Activated B cell treated with CpG ODN at 0.5 μM for 24 hours (primary cell): ENCODE measurements at regions of chr2 and their contacts with region 1.

Region 1: DNA sequence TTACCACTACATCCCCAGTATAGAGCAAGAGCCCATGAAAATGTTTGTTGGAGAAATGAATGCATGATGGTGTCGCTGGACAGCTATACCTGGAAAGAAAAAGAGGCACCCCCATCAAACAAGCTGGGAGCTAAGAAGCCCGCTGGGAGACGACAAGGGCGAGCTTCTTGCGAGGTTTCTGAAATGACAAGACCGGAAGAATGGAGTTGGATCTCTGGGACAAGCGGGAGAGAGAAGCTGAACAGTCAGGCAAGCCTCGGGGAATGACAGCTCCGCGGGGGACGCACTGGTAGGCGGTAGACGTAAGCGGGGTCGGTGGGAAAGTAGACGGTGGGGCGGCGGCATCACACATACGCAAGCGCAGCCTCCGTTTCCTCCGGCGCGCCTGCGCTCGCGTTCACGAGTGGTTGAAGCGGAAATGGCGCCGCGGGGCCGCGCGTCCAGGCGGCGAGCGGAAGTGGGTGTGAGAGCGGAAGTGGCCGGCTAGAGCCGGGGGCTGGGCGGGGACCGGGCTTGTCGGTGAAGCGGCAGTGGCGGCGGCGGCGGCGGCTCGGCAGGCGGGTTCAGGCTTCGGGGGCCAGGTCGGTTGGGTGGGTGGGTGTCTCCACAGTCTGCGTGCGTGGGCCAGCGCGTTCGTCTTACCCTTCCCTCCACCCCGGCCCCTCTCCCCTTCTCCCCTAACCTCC is at the start of gene ARPC2:
- DNase-seq: peak; percentile 95
- ATAC-seq: peak; percentile 63
- H3K4me3 Mint-ChIP-seq: peak within 1 kb of the TSS; percentile 98
- H3K27ac Mint-ChIP-seq: peak within 1 kb of the TSS; percentile 99
- H3K4me1 Mint-ChIP-seq: peaks cover 45% of the 10 kb centered on the region
- H3K27me3 Mint-ChIP-seq: no peaks in the 10 kb centered on the region
- CTCF ChIP-seq: no peak
- total RNA-seq, gene ARPC2: 711 and 737 TPM in 2 replicates

Region 2: DNA sequence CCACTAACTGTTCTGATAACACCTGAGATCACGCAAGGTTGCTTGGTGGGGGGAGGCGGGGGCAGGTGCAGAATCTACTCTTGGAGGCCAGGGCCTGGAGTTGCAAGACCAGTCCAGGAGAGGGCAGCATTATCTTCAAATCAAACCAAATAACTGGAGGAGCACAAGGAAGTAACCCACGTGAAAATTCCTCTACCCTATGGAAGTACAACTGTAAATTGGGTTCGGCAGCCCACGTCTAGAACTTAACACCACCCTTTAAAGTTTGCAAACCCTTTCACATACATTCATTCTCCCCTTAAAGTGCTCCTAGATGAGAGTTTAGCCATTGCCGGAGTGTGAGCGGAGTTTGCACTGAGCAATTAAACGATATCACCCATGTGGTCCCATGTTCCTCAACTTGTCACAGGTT is 30.5 kb before region 1 on chr2:
- CTCF ChIA-PET with region 1: interaction called, 5 read pairs
- POLR2A ChIA-PET with region 1: interaction called, 4 read pairs
- intact Hi-C with region 1: loop called (anchors 1 kb)
- DNase-seq: peak; percentile 43
- ATAC-seq: peak; percentile 99
- H3K4me3 Mint-ChIP-seq: no peak overlapping the region
- H3K27ac Mint-ChIP-seq: no peak overlapping the region
- H3K4me1 Mint-ChIP-seq: peaks cover 7% of the 10 kb centered on the region
- H3K27me3 Mint-ChIP-seq: peaks cover 1% of the 10 kb centered on the region
- CTCF ChIP-seq: peak; percentile 3

Region 3: GRCh38 chr2:218229239-218229638 is 12.4 kb after region 1 on chr2:
- CTCF ChIA-PET with region 1: interaction called, 23 read pairs
- POLR2A ChIA-PET with region 1: interaction called, 211 read pairs
- intact Hi-C with region 1: loop called (anchors 1 kb)
- DNase-seq: no peak
- ATAC-seq: peak; percentile 91
- H3K4me3 Mint-ChIP-seq: peak overlapping the region; percentile 56
- H3K27ac Mint-ChIP-seq: peak overlapping the region; percentile 87
- H3K4me1 Mint-ChIP-seq: peaks cover 67% of the 10 kb centered on the region
- H3K27me3 Mint-ChIP-seq: no peaks in the 10 kb centered on the region
- CTCF ChIP-seq: no peak

Region 4: DNA sequence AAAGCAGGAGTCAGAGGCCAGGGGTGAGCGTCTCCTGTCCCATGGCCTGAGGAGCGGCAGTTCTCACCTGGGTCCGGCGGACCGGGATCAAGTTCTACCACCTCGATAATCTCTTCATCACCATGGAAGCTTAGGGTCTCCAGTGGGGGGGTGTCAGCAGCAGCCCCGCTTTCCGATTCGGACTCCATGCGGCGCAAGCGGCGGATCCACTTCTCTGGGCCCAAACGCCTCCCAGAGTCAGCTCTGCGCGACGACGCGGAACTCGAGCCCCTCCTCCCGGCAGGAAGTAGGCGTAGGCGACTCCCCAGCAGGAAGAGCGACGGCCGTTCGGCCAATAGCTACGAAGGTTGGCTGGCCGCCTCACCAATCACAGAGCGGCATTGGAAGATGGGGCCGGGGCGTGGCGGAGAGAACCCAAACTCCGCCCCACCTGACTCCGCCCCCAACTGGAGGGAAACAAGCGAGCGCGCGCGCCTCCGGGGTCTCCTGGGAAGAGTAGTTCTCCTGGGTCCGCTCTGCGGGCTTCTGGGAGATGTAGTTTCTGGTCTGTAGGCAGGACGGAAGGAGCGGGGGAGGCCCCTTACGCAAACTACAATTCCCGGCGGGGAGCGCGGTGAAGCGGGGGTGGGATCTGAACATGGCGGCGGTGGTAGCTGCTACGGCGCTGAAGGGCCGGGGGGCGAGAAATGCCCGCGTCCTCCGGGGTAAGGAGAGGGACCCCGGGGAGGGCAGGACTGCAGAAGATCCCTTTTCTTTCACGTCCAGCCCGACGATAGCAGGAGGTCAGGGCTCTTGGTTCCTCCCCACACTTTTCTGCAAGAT is 53.3 kb after region 1 on chr2 and contains the starts of genes AAMP and PNKD:
- CTCF ChIA-PET with region 1: interaction called, 3 read pairs
- POLR2A ChIA-PET with region 1: interaction called, 52 read pairs
- intact Hi-C with region 1: loop called (anchors 1 kb)
- DNase-seq: peak; percentile 100
- ATAC-seq: peak; percentile 83
- H3K4me3 Mint-ChIP-seq: peak within 1 kb of the TSS; percentile 93
- H3K27ac Mint-ChIP-seq: peak within 1 kb of the TSS; percentile 88
- H3K4me1 Mint-ChIP-seq: peaks cover 67% of the 10 kb centered on the region
- H3K27me3 Mint-ChIP-seq: no peaks in the 10 kb centered on the region
- CTCF ChIP-seq: no peak
- total RNA-seq, gene AAMP: 63.4 and 63.6 TPM in 2 replicates
- total RNA-seq, gene PNKD: 21.0 and 23.7 TPM in 2 replicates

Region 5: GRCh38 chr2:218292048-218293014 is 75.5 kb after region 1 on chr2 and contains the start of gene TMBIM1:
- CTCF ChIA-PET with region 1: no interaction called
- POLR2A ChIA-PET with region 1: interaction called, 19 read pairs
- intact Hi-C with region 1: loop called (anchors 1 kb)
- DNase-seq: peak; percentile 89
- ATAC-seq: peak; percentile 80
- H3K4me3 Mint-ChIP-seq: peak within 1 kb of the TSS; percentile 83
- H3K27ac Mint-ChIP-seq: peak within 1 kb of the TSS; percentile 92
- H3K4me1 Mint-ChIP-seq: peaks cover 73% of the 10 kb centered on the region
- H3K27me3 Mint-ChIP-seq: no peaks in the 10 kb centered on the region
- CTCF ChIP-seq: peak; percentile 40
- total RNA-seq, gene TMBIM1: 40.7 and 45.0 TPM in 2 replicates

Region 6: GRCh38 chr2:218312267-218312756 is 95.5 kb after region 1 on chr2:
- CTCF ChIA-PET with region 1: no interaction called
- POLR2A ChIA-PET with region 1: no interaction called
- intact Hi-C with region 1: no loop called
- DNase-seq: no peak
- ATAC-seq: no peak
- H3K4me3 Mint-ChIP-seq: no peak overlapping the region
- H3K27ac Mint-ChIP-seq: no peak overlapping the region
- H3K4me1 Mint-ChIP-seq: peaks cover 5% of the 10 kb centered on the region
- H3K27me3 Mint-ChIP-seq: no peaks in the 10 kb centered on the region
- CTCF ChIP-seq: no peak

Region 7: GRCh38 chr2:218671654-218672566 is 455.1 kb after region 1 on chr2 and contains the starts of genes RNF25 and STK36:
- CTCF ChIA-PET with region 1: no interaction called
- POLR2A ChIA-PET with region 1: no interaction called
- intact Hi-C with region 1: loop called (anchors 5 kb)
- DNase-seq: peak; percentile 66
- ATAC-seq: peak; percentile 95
- H3K4me3 Mint-ChIP-seq: peak within 1 kb of the TSS; percentile 99
- H3K27ac Mint-ChIP-seq: peak within 1 kb of the TSS; percentile 97
- H3K4me1 Mint-ChIP-seq: peaks cover 21% of the 10 kb centered on the region
- H3K27me3 Mint-ChIP-seq: no peaks in the 10 kb centered on the region
- CTCF ChIP-seq: no peak
- total RNA-seq, gene RNF25: 29.7 and 35.1 TPM in 2 replicates
- total RNA-seq, gene STK36: 24.2 and 29.2 TPM in 2 replicates

Region 8: DNA sequence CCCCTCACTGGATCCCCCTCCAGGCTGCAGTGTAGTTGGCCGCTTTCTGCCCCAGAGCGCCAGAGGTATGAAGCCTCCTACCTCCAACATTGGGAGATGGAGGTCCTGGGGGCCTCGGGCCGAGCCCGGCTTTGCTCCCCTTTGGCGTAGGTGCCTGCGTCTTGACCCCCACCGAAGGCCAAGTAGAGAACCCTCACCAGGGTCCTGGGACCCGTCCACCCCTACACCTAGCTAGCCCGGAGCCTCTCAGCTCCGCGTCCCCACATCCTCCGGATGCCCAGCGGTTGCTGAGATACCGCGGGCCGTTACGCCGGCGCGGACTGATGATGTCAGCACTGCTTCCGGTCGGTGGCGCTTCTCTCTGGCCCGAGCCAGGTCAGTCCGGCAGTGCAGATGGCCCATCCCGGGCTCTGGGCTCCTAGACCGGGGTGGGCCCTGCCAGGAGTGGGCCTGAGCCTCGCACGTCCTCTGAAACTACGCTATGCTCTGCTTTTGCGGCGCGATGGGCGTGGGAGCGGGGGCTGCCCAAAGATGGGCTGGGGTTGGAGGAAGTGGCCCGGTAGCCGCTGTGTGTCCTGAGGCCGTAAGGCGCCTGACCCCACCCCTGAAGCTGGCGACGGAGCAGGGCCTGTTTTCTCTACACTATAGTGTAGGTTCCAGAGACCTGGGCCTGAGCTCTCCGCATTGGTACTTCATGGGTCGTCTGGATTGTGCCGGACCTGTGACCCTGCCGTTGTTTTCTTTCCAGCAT is 1028.5 kb after region 1 on chr2 and contains the starts of genes GLB1L and STK16:
- CTCF ChIA-PET with region 1: no interaction called
- POLR2A ChIA-PET with region 1: no interaction called
- intact Hi-C with region 1: loop called (anchors 2 kb)
- DNase-seq: peak; percentile 95
- ATAC-seq: peak; percentile 64
- H3K4me3 Mint-ChIP-seq: peak within 1 kb of the TSS; percentile 90
- H3K27ac Mint-ChIP-seq: peak within 1 kb of the TSS; percentile 98
- H3K4me1 Mint-ChIP-seq: peaks cover 57% of the 10 kb centered on the region
- H3K27me3 Mint-ChIP-seq: no peaks in the 10 kb centered on the region
- CTCF ChIP-seq: no peak
- total RNA-seq, gene GLB1L: 4.5 and 4.6 TPM in 2 replicates
- total RNA-seq, gene STK16: 31.0 and 36.5 TPM in 2 replicates